Dorsolateral prefrontal cortex (tissue), 120 donors: ENCODE measurements at regions of chr6 and their contacts with region 1.

Region 1: DNA sequence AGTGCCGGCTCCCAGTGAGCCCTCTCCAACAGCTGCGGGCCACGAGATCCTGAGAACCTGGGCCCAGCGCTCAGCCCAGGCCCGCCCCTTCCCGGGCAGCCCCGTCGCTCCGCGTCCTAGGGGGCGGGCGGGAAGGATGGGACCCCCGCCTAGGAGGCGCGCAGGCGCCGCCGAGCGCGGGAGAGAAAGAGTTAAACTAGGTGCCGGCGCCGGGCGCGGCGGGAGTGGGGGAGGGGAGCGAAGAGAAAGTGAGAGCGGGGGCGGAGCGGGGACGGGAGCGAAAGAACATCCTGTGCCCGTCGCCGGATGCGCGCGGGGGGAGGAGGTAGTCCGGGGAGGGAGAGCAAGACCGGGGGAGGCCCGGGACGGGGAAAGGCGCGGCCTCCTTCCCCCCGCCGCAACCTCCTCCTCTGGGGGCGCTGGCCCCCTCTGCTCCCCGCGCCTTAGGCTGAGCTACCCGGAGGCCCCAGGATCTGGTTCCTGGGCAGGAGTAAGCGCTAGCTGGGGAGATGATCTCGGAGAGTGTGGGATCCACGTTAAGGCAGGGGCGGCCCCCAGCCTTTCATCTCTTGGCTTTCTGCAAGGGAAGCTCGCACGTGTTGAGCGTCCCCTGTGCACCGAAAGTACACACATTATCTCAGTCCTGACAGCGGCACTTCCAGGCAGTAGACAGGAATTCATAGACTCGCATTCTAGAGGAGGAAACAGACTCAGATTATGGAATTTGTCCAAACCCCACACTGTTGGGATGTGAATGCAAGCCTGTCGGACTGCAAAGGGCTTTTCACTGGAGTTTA is 4.9 kb upstream of the ARMC12 start:
- DNase-seq: peak; percentile 83 to 92 (median 88)
- H3K4me3 ChIP-seq: peak overlapping the region; percentile 56 to 97 (median 75)
- H3K27ac ChIP-seq: peak overlapping the region; percentile 97 to 100 (median 100)
- H3K27me3 ChIP-seq: no peaks in the 10 kb centered on the region
- CTCF ChIP-seq: peak in 32 of 56 donors; percentile 2 to 53 (median 22)

Region 2: DNA sequence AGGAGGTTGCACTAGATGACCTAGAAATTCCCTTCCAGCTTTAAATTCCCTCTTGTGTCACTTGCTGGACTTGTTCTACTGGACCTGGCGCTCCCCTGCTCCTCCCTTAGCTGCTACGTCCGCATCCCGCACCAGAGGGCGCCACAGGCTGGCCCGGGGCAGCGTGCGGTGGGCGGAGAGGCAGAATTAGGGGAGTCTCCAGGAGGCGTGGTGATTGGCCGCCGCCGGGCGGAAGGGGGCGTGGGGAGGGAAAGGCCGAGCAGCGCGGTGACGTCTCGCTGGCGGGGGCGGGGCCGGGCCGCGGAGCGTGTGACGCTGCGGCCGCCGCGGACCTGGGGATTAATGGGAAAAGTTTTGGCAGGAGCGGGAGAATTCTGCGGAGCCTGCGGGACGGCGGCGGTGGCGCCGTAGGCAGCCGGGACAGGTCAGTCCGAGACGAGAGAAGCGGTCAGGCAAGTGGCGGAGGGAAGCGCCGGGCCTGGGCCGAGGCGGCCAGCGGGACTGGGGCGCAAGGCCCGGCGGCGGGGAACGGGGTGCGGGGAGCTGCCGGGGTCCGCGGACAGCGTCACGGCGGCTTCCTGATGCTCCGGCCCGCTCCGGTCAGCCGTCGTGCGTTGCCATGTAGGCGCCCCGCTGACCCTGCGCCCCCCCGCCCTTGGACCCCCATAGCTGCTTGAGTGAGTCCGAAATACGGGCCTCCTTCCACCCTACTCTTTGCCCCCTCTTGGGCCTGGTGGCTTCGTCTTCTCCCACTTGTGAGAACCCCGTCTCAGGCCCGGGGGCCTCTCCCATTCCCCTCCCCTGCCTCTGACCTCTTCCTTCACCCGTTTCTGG is 389.5 kb before region 1 on chr6 and contains the start of gene PPARD:
- intact Hi-C with region 1: loop called in 1 of 2 experiments (anchors 5 kb)
- DNase-seq: peak; percentile 96 to 100 (median 98)
- H3K4me3 ChIP-seq: peak within 1 kb of the TSS; percentile 70 to 99 (median 92)
- H3K27ac ChIP-seq: peak within 1 kb of the TSS in 57 of 59 donors; percentile 40 to 97 (median 87)
- H3K27me3 ChIP-seq: no peaks in the 10 kb centered on the region
- CTCF ChIP-seq: peak; percentile 90 to 100 (median 99)
- total RNA-seq, gene PPARD: 26.8 to 49.1 (median 36.9) TPM

Region 3: DNA sequence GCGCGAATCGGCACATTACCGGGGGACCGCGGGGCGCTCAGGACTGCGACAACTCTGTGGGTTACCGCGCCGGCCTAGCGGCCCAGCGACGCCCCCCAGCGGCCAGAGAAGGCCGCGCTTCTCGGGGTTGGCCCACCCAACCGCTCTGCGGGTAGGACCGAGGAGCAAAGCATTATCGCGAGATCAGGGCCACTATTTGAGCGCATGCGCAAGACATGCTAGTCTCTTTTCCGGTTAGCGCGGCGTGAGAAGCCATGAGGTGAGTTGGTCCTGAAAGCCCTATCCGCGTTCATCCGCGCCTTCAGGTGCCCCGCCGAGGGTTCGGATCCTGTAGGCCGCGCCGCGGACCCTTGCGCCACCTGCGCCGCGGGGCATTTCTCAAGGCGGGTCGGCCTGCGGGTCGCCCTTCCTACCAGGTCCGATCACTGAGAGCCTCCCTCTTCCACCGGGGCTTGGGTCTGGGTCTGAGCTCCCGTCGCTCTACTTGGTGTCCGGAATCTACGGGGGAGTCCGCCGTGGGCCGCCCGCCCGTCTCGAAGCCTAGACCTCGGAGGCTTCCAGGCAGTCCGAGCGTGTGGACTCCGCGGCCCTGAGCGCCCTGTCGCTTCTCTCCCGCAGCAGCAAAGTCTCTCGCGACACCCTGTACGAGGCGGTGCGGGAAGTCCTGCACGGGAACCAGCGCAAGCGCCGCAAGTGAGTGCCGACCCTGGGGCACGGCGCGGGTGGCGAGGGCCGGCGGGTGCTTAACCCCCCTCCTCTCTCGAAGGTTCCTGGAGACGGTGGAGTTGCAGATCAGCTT is 263.6 kb before region 1 on chr6 and contains the start of gene RPL10A:
- intact Hi-C with region 1: loop called in 1 of 2 experiments (anchors 5 kb)
- DNase-seq: peak; percentile 90 to 97 (median 96)
- H3K4me3 ChIP-seq: peak within 1 kb of the TSS; percentile 58 to 97 (median 79)
- H3K27ac ChIP-seq: peak within 1 kb of the TSS; percentile 49 to 97 (median 87)
- H3K27me3 ChIP-seq: no peaks in the 10 kb centered on the region
- CTCF ChIP-seq: peak; percentile 83 to 99 (median 94)
- total RNA-seq, gene RPL10A: 245 to 522 (median 369) TPM

Region 4: DNA sequence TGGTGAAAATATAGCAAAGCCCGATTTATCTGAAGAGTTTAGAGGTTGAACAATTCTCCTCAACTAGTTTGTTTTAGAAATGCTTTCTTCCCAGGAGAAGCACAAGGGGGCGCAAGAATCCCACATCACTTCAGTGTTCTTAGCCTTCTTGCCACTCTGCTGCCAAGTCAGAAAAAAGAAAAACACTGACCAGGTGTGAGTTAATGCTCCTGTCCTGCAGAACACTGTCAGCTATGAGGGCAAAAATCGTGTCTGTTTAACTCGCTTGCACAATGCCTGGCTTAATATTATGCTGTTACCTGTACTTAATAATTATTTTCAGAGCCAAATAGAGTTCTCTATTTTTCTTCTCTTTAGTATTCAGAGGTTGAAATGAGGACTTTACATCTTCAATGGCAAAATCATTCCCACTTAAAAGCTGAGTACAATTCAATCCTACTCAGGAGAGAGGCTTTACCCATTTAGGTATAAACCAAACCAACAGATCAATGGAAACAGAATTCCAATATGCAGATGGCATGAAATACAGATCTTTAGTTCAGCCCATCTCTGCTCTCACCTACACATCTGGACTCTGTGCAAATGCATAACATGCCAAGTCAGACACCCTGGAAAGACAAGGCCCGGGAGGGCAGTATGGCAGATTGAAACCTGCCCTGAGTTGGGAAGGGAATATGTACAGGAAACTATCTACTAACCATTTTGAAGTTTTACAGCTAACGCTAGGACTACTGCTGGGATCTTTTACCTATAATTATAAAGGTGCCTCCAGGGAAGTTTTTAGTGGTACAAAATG is 147.8 kb before region 1 on chr6:
- intact Hi-C with region 1: loop called (anchors 1 to 2 kb)
- DNase-seq: peak in 7 of 10 donors; percentile 43 to 81 (median 66)
- H3K4me3 ChIP-seq: no peak overlapping the region
- H3K27ac ChIP-seq: peak overlapping the region in 42 of 59 donors; percentile 0 to 78 (median 42)
- H3K27me3 ChIP-seq: no peaks in the 10 kb centered on the region
- CTCF ChIP-seq: peak; percentile 67 to 98 (median 89)

Region 5: GRCh38 chr6:35688581-35689322 is 43.2 kb before region 1 on chr6 and contains the start of gene FKBP5:
- intact Hi-C with region 1: loop called (anchors 1 to 2 kb)
- DNase-seq: peak; percentile 63 to 96 (median 94)
- H3K4me3 ChIP-seq: peak within 1 kb of the TSS; percentile 66 to 98 (median 84)
- H3K27ac ChIP-seq: peak within 1 kb of the TSS; percentile 23 to 97 (median 86)
- H3K27me3 ChIP-seq: no peaks in the 10 kb centered on the region
- CTCF ChIP-seq: peak in 11 of 56 donors; percentile 8 to 38 (median 16)
- total RNA-seq, gene FKBP5: 12.0 to 124 (median 62.9) TPM

Region 6: GRCh38 chr6:35797837-35798526 is 66.0 kb after region 1 on chr6:
- intact Hi-C with region 1: no loop called
- DNase-seq: no peak
- H3K4me3 ChIP-seq: no peak overlapping the region
- H3K27ac ChIP-seq: no peak overlapping the region
- H3K27me3 ChIP-seq: peaks cover 0 to 3% (median 0%) of the 10 kb centered on the region in 45 donors
- CTCF ChIP-seq: no peak